Panc1 (cell line): ENCODE measurements at regions of chr10 and their contacts with region 1.

Region 1: GRCh38 chr10:72435570-72435969 is 80.9 kb upstream of the DNAJB12 start:
- DNase-seq: no peak
- ATAC-seq: no peak
- H3K4me3 ChIP-seq: no peak overlapping the region
- H3K27ac ChIP-seq: no peak overlapping the region
- H3K4me1 ChIP-seq: no peaks in the 10 kb centered on the region
- H3K27me3 ChIP-seq: no peaks in the 10 kb centered on the region
- CTCF ChIP-seq: no peak

Region 2: DNA sequence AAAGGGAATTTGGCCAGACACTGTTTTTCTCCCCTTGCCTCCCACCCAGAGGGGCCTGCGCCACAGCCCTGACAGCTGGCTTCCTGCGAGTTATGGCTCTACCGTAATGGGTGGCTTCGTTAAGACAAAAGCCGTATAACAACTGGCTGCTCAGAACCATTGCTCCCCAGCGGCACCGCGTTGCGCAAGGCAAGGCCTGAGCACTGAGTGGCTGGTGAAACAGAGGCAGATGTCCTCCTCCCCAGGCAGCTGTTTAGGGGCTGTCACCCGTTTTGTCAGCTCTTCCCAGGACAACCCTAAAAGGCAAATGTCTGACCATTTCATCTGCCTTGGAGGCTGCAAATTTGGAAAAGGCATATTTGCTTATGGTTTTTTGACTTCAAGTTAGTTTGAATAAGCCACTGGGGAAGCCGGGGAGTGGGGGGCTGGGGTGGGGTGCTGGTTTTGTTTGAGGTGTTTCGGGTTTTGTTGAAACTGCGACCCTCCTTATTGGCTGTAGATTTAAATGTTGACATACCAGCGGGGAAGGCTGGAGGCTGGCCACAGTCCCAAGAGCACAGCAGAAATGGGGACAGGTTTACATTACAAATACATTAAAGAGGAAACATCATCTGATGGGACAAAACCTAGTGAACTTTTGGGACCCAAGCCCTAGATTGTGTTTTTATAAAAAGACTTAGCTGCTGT is 346.5 kb before region 1 on chr10:
- CTCF ChIA-PET with region 1: interaction called, 13 read pairs
- POLR2A ChIA-PET with region 1: no interaction called
- in situ Hi-C with region 1: no loop called
- intact Hi-C with region 1: no loop called
- DNase-seq: no peak
- ATAC-seq: no peak
- H3K4me3 ChIP-seq: no peak overlapping the region
- H3K27ac ChIP-seq: peak overlapping the region; percentile 60; the same call in 1 of the 2 replicates
- H3K4me1 ChIP-seq: peaks cover 8% of the 10 kb centered on the region
- H3K27me3 ChIP-seq: no peaks in the 10 kb centered on the region
- CTCF ChIP-seq: no peak

Region 3: GRCh38 chr10:72597897-72598296 is 162.3 kb after region 1 on chr10:
- CTCF ChIA-PET with region 1: no interaction called
- POLR2A ChIA-PET with region 1: no interaction called
- in situ Hi-C with region 1: no loop called
- intact Hi-C with region 1: no loop called
- DNase-seq: no peak
- ATAC-seq: no peak
- H3K4me3 ChIP-seq: no peak overlapping the region
- H3K27ac ChIP-seq: no peak overlapping the region
- H3K4me1 ChIP-seq: no peaks in the 10 kb centered on the region
- H3K27me3 ChIP-seq: no peaks in the 10 kb centered on the region
- CTCF ChIP-seq: no peak

Region 4: DNA sequence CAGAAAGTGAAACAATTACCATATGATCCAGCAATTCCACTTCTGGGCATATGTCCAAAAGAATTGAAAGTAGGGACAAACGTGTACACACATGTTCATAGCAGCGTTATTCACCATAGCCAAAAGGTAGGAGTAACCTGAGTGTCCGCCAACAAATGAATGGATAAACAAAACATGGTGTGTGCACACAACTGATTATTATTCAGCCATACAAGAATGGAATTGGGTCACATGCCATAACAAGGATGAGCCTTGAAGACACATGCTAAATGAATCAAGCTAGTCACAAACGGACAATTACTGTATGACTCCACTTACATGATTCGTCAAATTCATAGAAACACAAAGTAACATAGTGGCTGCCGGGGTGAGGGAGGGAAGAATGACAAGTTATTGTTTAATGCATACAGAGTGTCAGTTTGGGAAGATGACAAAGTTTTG is 453.8 kb after region 1 on chr10:
- CTCF ChIA-PET with region 1: no interaction called
- POLR2A ChIA-PET with region 1: no interaction called
- in situ Hi-C with region 1: no loop called
- intact Hi-C with region 1: no loop called
- DNase-seq: no peak
- ATAC-seq: no peak
- H3K4me3 ChIP-seq: no peak overlapping the region
- H3K27ac ChIP-seq: no peak overlapping the region
- H3K4me1 ChIP-seq: no peaks in the 10 kb centered on the region
- H3K27me3 ChIP-seq: no peaks in the 10 kb centered on the region
- CTCF ChIP-seq: no peak